GM12878 (cell line): ENCODE measurements at regions of chr6 and their contacts with region 1.

Region 1: GRCh38 chr6:149431905-149432775 is 32.1 kb downstream of the SUMO4 start:
- DNase-seq: peak; percentile 60
- ATAC-seq: peak; percentile 99
- H3K4me3 ChIP-seq: no peak overlapping the region
- H3K27ac ChIP-seq: no peak overlapping the region
- H3K4me1 ChIP-seq: no peaks in the 10 kb centered on the region
- H3K27me3 ChIP-seq: no peaks in the 10 kb centered on the region; a peak in 1 of 4 replicates
- CTCF ChIP-seq: peak; percentile 87 to 95 (median 93)
- EP300 ChIP-seq: no peak
- POLR2A ChIP-seq: no peak
- RAD21 ChIP-seq: peak; percentile 94

Region 2: DNA sequence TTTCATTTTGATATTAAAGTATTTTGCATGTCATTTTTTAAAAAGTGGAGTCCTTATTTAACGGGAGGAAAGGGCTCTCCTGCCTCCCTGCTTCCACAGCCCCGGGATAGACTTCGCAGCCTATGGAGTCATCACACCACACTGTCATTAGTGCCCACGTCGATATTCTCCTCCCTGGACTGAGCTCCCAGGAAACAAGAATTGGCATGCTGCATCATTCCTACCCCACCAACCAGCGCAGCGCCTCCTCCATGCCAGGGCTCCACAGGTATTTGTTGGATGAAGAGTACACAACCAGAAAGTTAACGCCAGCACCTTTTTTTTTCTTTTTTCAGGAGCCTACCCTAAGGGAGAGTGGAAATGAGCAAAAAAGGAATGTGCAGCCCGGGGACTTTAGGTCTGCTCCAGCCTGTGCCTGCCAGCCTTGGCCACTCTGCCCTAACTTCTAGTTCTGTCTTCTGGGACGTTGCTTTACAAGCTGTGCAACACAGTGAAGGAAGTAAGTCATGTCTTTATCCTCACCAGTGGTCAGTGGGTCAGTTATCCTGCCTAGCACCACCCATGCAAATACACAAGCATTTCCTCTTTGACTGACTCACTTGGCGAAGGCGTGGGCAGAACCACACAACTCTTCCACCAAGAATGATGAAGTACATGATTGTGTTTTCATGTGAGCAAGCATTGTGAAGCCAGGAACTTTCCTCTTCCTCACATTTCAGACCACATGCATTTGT is 866.0 kb before region 1 on chr6:
- CTCF ChIA-PET with region 1: no interaction called
- POLR2A ChIA-PET with region 1: no interaction called
- RAD21 ChIA-PET with region 1: no interaction called
- SMC1A ChIA-PET with region 1: no interaction called
- in situ Hi-C with region 1: loop called (anchors 5 kb)
- intact Hi-C with region 1: no loop called
- DNase-seq: no peak
- ATAC-seq: peak; percentile 83
- H3K4me3 ChIP-seq: no peak overlapping the region
- H3K27ac ChIP-seq: no peak overlapping the region
- H3K4me1 ChIP-seq: no peaks in the 10 kb centered on the region; the same call in 1 of the 2 replicates
- H3K27me3 ChIP-seq: peaks cover 0 to 7% of the 10 kb centered on the region in 2 experiments; a peak in 1 of 4 replicates
- CTCF ChIP-seq: no peak
- EP300 ChIP-seq: no peak
- POLR2A ChIP-seq: no peak
- RAD21 ChIP-seq: no peak

Region 3: GRCh38 chr6:148682990-148683389 is 749.1 kb before region 1 on chr6:
- CTCF ChIA-PET with region 1: no interaction called
- POLR2A ChIA-PET with region 1: no interaction called
- RAD21 ChIA-PET with region 1: no interaction called
- SMC1A ChIA-PET with region 1: no interaction called
- in situ Hi-C with region 1: no loop called
- intact Hi-C with region 1: no loop called
- DNase-seq: no peak
- ATAC-seq: peak; percentile 41
- H3K4me3 ChIP-seq: no peak overlapping the region
- H3K27ac ChIP-seq: no peak overlapping the region
- H3K4me1 ChIP-seq: peaks cover 17% of the 10 kb centered on the region
- H3K27me3 ChIP-seq: no peaks in the 10 kb centered on the region
- CTCF ChIP-seq: no peak
- EP300 ChIP-seq: no peak
- POLR2A ChIP-seq: no peak
- RAD21 ChIP-seq: no peak

Region 4: GRCh38 chr6:149037051-149037671 is 395.0 kb before region 1 on chr6:
- CTCF ChIA-PET with region 1: interaction called, 169 read pairs
- POLR2A ChIA-PET with region 1: no interaction called
- RAD21 ChIA-PET with region 1: interaction called, 145 read pairs
- SMC1A ChIA-PET with region 1: interaction called, 135 read pairs
- in situ Hi-C with region 1: loop called (anchors 5 kb)
- intact Hi-C with region 1: no loop called
- DNase-seq: no peak
- ATAC-seq: no peak
- H3K4me3 ChIP-seq: no peak overlapping the region
- H3K27ac ChIP-seq: no peak overlapping the region
- H3K4me1 ChIP-seq: peaks cover 21% of the 10 kb centered on the region
- H3K27me3 ChIP-seq: no peaks in the 10 kb centered on the region
- CTCF ChIP-seq: no peak
- EP300 ChIP-seq: no peak
- POLR2A ChIP-seq: no peak
- RAD21 ChIP-seq: no peak

Region 5: GRCh38 chr6:149082286-149082707 is 349.8 kb before region 1 on chr6:
- CTCF ChIA-PET with region 1: interaction called, 138 read pairs
- POLR2A ChIA-PET with region 1: interaction called, 3 read pairs
- RAD21 ChIA-PET with region 1: interaction called, 122 read pairs
- SMC1A ChIA-PET with region 1: interaction called, 74 read pairs
- in situ Hi-C with region 1: loop called (anchors 5 kb)
- intact Hi-C with region 1: loop called (anchors 1 kb)
- DNase-seq: no peak
- ATAC-seq: peak; percentile 91
- H3K4me3 ChIP-seq: no peak overlapping the region
- H3K27ac ChIP-seq: no peak overlapping the region
- H3K4me1 ChIP-seq: peaks cover 33% of the 10 kb centered on the region
- H3K27me3 ChIP-seq: no peaks in the 10 kb centered on the region
- CTCF ChIP-seq: peak; percentile 77 to 88 (median 79)
- EP300 ChIP-seq: no peak
- POLR2A ChIP-seq: no peak
- RAD21 ChIP-seq: peak; percentile 94

Region 6: GRCh38 chr6:149190224-149190831 is 241.8 kb before region 1 on chr6:
- CTCF ChIA-PET with region 1: interaction called, 41 read pairs
- POLR2A ChIA-PET with region 1: no interaction called
- RAD21 ChIA-PET with region 1: interaction called, 47 read pairs
- SMC1A ChIA-PET with region 1: interaction called, 49 read pairs
- in situ Hi-C with region 1: no loop called
- intact Hi-C with region 1: loop called (anchors 1 kb)
- DNase-seq: no peak
- ATAC-seq: peak; percentile 95
- H3K4me3 ChIP-seq: no peak overlapping the region
- H3K27ac ChIP-seq: no peak overlapping the region
- H3K4me1 ChIP-seq: peaks cover 5% of the 10 kb centered on the region
- H3K27me3 ChIP-seq: no peaks in the 10 kb centered on the region
- CTCF ChIP-seq: peak; percentile 39 to 57 (median 51)
- EP300 ChIP-seq: no peak
- POLR2A ChIP-seq: no peak
- RAD21 ChIP-seq: peak; percentile 61

Region 7: GRCh38 chr6:149473080-149474052 is 41.2 kb after region 1 on chr6:
- CTCF ChIA-PET with region 1: interaction called, 5 read pairs
- POLR2A ChIA-PET with region 1: no interaction called
- RAD21 ChIA-PET with region 1: interaction called, 7 read pairs
- SMC1A ChIA-PET with region 1: interaction called, 11 read pairs
- in situ Hi-C with region 1: no loop called
- intact Hi-C with region 1: no loop called
- DNase-seq: no peak
- ATAC-seq: peak; percentile 24
- H3K4me3 ChIP-seq: peak overlapping the region; percentile 44; the same call in 1 of the 2 replicates
- H3K27ac ChIP-seq: peak overlapping the region; percentile 29
- H3K4me1 ChIP-seq: peaks cover 63% of the 10 kb centered on the region
- H3K27me3 ChIP-seq: no peaks in the 10 kb centered on the region
- CTCF ChIP-seq: peak in 2 of 3 experiments; percentile 12 to 27; a peak in 1 of 6 replicates
- EP300 ChIP-seq: no peak
- POLR2A ChIP-seq: no peak
- RAD21 ChIP-seq: peak; percentile 34; the same call in 1 of the 2 replicates

Region 8: DNA sequence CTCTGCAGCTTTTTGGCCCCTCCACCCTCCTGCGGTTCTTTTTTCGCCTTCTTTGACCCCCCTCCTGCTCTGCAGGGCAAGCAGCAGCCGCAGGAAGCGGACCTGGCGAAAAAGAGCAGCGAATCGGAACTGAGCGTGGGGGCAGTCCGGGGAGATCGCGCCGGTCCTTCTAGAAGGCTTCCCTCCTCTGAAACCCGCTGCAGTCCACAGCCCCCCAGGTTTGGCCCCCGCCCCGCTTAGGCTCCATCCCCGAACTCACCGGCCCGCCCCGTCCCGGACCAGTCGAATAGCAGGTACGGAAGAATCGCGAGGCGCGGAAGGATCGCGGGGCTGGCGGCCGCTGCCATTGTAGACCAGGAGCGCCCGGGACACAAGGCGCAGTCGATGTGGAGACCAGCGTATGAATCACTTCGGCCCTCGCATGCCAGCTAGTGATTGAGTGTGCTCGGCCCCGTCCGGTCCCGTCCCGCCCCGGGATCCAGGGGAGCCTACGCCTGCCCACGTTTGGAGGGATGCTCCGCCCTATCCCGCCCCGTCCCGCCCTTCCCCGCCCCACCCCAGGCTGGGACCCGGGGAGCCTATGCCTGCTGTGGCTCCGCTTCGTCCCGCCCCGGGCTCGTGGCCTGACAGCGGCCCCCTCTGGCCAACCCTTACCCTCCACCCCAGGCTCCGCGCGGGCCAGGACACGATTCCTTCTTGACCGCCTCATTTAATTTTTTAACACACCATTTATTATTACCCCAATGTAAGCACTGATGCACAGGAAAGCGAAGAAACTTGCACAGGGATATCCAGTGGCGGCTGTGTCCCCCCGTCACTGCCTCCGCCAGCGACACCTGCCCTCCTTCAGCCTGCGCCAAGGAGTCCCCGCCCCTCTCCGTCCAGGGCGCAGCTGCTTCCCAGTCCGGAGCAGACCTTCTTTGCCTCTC is 636.8 kb after region 1 on chr6 and contains the start of gene ULBP3:
- CTCF ChIA-PET with region 1: no interaction called
- POLR2A ChIA-PET with region 1: no interaction called
- RAD21 ChIA-PET with region 1: no interaction called
- SMC1A ChIA-PET with region 1: no interaction called
- in situ Hi-C with region 1: no loop called
- intact Hi-C with region 1: no loop called
- DNase-seq: no peak
- ATAC-seq: peak; percentile 93
- H3K4me3 ChIP-seq: peak within 1 kb of the TSS; percentile 57
- H3K27ac ChIP-seq: no peak within 1 kb of the TSS
- H3K4me1 ChIP-seq: no peaks in the 10 kb centered on the region
- H3K27me3 ChIP-seq: peaks cover 0 to 2% of the 10 kb centered on the region in 2 experiments; a peak in 1 of 4 replicates
- CTCF ChIP-seq: peak; percentile 13 to 52 (median 44); a peak in 3 of 6 replicates
- EP300 ChIP-seq: no peak
- POLR2A ChIP-seq: peak; percentile 38; the same call in 1 of the 2 replicates
- RAD21 ChIP-seq: no peak
- polyA plus RNA-seq, gene ULBP3: not detected